PC-9 (cell line): ENCODE measurements at regions of chr5 and their contacts with region 1.

Region 1: GRCh38 chr5:102670224-102670836 is 84.8 kb upstream of the PAM start:
- DNase-seq: peak in 1 of 2 experiments; percentile 14
- H3K4me3 ChIP-seq: no peak overlapping the region
- H3K27ac ChIP-seq: no peak overlapping the region
- H3K4me1 ChIP-seq: peaks cover 16% of the 10 kb centered on the region
- H3K27me3 ChIP-seq: no peaks in the 10 kb centered on the region
- CTCF ChIP-seq: peak; percentile 79

Region 2: GRCh38 chr5:102583276-102584124 is 86.8 kb before region 1 on chr5:
- CTCF ChIA-PET with region 1: no interaction called
- POLR2A ChIA-PET with region 1: no interaction called
- intact Hi-C with region 1: loop called (anchors 2 kb)
- DNase-seq: no peak
- H3K4me3 ChIP-seq: no peak overlapping the region
- H3K27ac ChIP-seq: no peak overlapping the region
- H3K4me1 ChIP-seq: no peaks in the 10 kb centered on the region
- H3K27me3 ChIP-seq: no peaks in the 10 kb centered on the region
- CTCF ChIP-seq: peak; percentile 74

Region 3: DNA sequence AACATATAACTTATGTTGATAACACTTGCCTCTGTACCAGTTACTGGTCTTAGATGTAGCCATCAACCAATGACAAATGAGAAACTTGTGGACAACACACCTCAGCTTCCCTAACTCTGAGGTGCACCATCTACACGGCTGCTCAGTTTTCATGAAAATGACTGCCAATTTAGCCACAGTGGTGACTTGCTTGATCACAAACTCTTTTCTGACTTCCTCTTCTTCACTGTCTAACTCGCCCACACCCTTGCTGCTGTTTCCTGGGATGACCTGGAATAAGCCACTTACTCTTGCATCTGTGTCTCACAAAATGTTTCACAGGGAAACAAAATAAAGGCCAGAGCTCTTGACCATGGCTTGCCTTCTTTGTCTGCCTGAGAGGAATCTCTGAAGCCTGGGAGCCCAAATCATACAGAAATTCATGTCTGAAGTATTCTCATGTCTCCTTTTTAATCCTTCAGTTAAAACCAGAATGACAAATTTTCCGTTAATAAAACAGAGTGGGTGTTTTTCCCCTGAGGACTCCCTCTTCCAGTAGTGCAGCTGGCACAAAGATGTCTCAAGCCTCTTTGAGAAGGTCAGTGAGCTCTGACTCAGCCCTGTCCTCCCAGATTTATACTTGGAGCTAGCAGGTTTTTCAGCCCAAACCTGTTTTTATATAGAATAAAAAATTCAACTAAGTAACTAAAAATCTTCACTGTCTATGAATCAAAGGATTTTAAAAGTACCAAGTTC is 41.7 kb before region 1 on chr5:
- CTCF ChIA-PET with region 1: no interaction called
- POLR2A ChIA-PET with region 1: no interaction called
- intact Hi-C with region 1: loop called (anchors 2 kb)
- DNase-seq: peak; percentile 31 to 85
- H3K4me3 ChIP-seq: no peak overlapping the region
- H3K27ac ChIP-seq: no peak overlapping the region
- H3K4me1 ChIP-seq: peaks cover 29% of the 10 kb centered on the region
- H3K27me3 ChIP-seq: no peaks in the 10 kb centered on the region
- CTCF ChIP-seq: no peak